ENCODE measurements at regions of chr2 and their contacts with region 1.

Region 1: GRCh38 chr2:231522799-231523180 is 7.5 kb downstream of the NMUR1 start:
- DNase-seq: no peak
- CTCF ChIP-seq: no peak

Region 2: GRCh38 chr2:231378026-231378722 is 144.6 kb before region 1 on chr2:
- in situ Hi-C with region 1: no loop called
- DNase-seq: no peak
- CTCF ChIP-seq: no peak

Region 3: DNA sequence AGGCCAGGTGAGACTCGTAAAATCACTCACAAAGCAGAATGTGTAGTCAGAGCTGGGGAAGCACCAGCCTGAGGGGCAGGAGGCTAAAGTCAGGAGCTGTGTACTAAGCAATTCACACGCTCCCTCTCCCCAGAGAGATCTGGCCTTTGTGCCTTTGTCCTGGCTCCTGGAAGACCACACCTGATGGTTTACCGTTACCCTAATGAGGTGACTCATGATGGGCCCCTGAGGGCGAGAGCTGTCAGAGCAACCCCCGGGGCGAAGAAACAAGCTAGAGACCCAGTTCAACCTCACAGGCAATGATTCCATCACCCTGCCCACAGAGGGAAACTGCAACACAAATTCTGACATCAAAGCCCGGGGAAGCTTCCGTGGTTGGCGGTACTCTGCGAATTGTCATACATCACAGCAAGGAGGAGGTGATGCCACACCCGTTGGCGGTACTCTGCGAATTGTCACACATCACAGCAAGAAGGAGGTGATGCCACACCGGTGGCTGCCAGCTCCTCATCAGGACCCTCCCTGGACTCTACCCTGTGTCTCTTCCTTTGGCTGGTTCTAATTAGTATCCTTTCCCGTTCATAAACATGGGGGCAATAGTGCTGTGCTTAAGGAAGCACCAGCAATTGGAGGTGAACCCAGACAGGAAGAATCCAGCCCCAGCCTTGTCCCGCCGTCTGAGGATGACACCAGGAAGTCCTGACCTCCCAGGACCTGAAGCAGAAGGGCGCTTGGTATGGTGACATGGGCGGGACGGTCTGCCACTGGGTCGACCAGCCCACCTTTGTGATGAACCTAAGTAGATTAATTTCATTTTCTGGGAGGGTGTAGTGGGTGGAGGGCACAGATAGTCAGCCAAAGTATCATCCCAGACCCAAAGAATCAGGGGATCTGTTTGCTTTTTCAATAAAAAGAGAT is 96.7 kb before region 1 on chr2:
- in situ Hi-C with region 1: no loop called
- DNase-seq: no peak
- CTCF ChIP-seq: no peak

Region 4: GRCh38 chr2:231463698-231464575 is 58.9 kb before region 1 on chr2 and contains the start of gene NCL:
- in situ Hi-C with region 1: no loop called
- DNase-seq: peak; percentile 87
- CTCF ChIP-seq: no peak

Region 5: DNA sequence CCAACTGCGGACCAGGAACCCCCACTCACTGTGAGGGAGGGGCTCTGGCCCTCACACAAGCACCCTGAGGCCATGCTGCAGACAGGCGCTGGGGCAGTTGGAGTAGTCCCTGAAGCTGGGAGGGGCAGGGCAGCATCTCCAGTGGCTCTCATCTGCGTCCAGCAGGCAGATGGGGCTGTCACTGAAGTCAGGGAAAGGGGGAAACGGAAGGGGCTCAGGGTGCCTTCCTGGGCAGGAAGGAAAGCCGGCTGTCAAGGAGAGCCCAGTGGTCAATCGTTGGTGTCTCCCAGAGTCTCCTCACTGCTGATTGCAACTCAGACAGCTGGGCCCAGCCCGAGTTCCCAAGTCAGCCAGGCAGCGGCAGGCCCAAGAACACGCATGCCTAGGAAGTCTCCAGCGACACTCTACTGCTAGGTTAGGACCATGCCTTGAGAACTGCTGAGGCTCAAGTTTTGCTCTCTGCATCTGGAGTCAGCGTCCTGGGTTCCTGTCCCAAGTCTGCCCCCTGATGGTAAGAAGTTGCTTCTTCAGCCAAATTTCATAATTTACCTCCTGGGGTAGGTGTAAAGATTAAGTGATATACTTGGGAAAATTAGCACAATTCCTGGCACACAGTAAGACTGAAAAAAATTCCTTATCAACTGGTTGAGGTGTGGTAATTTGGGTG is 34.9 kb after region 1 on chr2:
- in situ Hi-C with region 1: loop called (anchors 5 kb)
- DNase-seq: peak; percentile 90
- CTCF ChIP-seq: peak; percentile 62

Region 6: DNA sequence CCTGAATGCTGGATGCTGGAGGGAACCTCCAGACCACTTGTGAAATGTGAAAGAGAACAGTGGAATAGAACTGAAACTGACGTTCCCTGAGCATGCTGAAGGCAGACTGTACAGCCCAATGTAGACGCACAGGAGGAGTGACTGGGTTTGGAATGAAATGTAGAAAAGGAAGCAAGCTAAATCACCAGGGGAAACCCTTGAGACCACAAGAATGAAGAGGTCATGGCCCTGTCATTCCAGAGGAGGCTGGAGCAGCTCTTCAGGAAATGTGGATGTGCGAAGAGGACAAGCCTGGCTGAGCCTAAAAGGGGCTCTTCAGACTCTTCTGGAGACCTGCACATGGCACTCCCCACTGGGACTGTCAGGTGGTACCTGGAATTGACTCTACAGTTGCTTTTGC is 737.3 kb after region 1 on chr2:
- in situ Hi-C with region 1: no loop called
- DNase-seq: no peak
- CTCF ChIP-seq: no peak

Measured in GM13976 (cell line).